Naive thymus-derived CD8-positive, alpha-beta T cell (primary cell): ENCODE measurements at regions of chr16 and their contacts with region 1.

Region 1: DNA sequence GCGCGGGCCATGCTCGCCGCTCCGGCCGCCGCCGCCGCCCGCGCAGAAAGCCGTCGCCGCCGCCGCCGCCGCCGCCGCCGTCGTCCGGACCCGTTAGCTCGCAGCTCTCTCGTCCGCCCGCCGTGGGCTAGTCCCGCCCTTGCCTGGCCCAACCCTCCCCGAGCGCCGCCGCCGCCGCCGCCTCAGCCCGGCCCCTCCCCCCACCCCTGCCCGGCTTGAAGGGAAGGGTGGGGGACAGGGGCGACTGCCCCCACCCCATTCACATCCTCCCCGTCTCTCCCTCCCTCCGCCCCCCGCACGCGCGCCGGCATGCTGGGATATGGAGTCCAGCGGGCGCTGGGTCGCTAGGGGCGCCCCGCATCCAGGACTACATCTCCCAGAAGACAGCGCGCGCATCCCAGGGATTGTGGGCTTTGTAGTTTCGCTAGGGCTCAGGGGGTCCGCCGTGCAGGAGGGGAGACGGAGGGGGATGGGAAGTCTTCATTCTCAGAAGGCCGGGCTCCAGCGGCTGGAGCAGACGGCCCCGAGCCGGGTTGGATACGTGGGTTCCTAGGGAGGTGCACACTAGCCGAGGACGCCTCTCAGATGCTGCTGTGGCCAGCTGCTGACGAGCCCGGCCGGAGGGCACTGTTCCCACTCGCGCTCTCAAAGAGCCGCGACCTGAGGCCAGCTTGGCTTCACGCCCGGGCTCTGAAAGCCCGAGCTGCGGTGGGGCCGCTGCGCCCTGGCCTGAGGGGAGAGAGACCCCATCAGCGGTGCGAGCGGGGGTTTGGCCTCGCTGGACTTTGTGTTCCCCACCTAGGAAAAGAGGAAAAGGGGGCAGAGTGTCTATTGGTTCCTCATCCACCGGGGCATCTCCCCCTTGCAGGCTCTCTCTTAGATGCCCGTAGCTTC is at the start of gene ST3GAL2:
- DNase-seq: peak; percentile 87 to 97 (median 91)
- ATAC-seq: peak; percentile 91 to 95
- H3K4me3 Mint-ChIP-seq: peak within 1 kb of the TSS; percentile 89 to 98 (median 97)
- H3K27ac Mint-ChIP-seq: peak within 1 kb of the TSS; percentile 83 to 97 (median 96)
- H3K4me1 Mint-ChIP-seq: peaks cover 17 to 49% (median 35%) of the 10 kb centered on the region in 4 donors
- H3K27me3 Mint-ChIP-seq: no peaks in the 10 kb centered on the region
- polyA plus RNA-seq, gene ST3GAL2: 14.6 to 23.4 (median 16.5) TPM

Region 2: GRCh38 chr16:70407811-70408274 is 31.4 kb before region 1 on chr16:
- POLR2A ChIA-PET with region 1: interaction called, 12 read pairs
- DNase-seq: no peak
- ATAC-seq: no peak
- H3K4me3 Mint-ChIP-seq: peak overlapping the region in 9 of 10 donors; percentile 14 to 74 (median 57)
- H3K27ac Mint-ChIP-seq: peak overlapping the region; percentile 60 to 96 (median 83)
- H3K4me1 Mint-ChIP-seq: peaks cover 30 to 70% (median 66%) of the 10 kb centered on the region in 4 donors
- H3K27me3 Mint-ChIP-seq: no peaks in the 10 kb centered on the region

Region 3: DNA sequence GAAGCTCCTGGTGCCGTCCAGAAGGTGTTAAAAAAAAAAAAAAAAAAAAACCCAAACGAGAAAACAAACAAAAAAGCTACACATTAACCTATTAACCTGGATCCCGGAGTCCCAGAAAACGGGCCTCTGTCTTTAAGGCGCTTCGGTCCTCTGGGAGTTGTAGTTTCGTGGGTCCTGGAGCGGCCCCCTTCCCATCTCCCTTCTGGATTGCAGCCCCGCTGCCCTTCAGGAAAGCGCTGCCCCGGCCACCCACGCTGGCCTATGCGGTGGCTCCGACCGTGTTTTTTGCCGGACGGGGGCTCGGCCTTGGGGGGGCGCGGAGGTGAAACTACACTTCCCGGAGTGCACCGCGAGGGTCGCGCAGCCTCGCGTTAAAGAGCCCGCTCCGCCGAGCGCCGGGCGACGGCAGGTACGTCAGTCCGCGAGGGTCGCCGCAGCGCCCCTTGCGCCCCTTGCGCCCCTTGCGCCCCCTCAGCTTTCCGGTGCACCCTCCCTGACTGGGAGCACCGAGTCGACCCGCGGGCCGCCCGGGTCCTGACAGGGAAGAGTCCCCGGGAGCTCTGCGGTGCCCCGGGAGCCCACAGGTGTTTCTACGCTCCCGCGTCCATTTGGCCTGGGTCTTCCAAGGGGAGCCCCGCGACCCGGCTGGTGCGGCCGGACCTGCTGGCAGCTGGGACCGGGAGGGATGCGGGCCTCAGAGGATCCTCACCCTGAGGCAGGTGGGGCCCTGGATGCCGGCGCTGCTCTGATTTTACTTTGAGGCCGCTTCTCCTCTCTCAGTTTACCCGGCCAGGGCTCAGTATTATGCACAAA is 15.2 kb after region 1 on chr16 and contains the start of gene FCSK:
- POLR2A ChIA-PET with region 1: interaction called, 16 read pairs
- DNase-seq: peak; percentile 53 to 94 (median 72)
- ATAC-seq: peak; percentile 92 to 93
- H3K4me3 Mint-ChIP-seq: peak within 1 kb of the TSS; percentile 86 to 96 (median 93)
- H3K27ac Mint-ChIP-seq: peak within 1 kb of the TSS; percentile 88 to 95 (median 92)
- H3K4me1 Mint-ChIP-seq: peaks cover 6 to 40% (median 23%) of the 10 kb centered on the region in 4 donors
- H3K27me3 Mint-ChIP-seq: no peaks in the 10 kb centered on the region
- polyA plus RNA-seq, gene FCSK: 4.5 to 9.6 (median 9.3) TPM